Panc1 (cell line): ENCODE measurements at regions of chr2 and their contacts with region 1.

Region 1: GRCh38 chr2:143186876-143187275 is 57.7 kb downstream of the ARHGAP15 start:
- DNase-seq: no peak
- ATAC-seq: no peak
- H3K4me3 ChIP-seq: no peak overlapping the region
- H3K27ac ChIP-seq: no peak overlapping the region
- H3K4me1 ChIP-seq: no peaks in the 10 kb centered on the region
- H3K27me3 ChIP-seq: no peaks in the 10 kb centered on the region; the same call in 1 of the 2 replicates
- CTCF ChIP-seq: no peak

Region 2: DNA sequence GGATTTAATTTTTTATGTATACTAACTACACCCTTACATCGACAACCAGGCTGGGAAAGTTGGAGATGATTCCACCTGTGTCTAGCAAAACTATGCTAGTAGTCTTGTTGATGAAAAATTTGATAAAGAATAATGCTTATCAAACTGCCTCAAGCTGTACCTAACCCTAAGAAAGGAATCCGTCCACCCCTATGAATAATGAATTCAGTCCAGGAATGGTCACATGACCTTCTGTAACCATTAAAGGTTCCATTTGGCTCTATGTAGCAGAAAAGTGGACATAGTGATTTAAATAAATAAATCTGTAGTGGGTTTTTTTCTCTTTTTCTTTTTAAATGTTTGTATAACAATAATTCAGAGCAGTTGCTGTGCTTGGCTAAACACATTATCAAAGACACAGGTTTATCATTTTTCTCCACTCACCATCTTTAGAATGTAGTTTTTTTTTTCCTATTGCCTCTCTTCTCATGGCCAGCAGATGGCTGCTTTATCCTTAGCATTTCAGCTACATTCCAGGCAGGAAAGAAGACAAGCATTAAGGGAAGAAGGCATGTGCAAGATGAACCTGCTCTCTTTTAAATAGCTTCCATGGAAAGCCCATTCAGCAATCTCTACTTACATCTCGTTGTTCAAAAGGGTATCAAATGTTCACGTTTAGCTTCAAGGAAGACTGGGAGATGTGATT is 15.2 kb before region 1 on chr2:
- CTCF ChIA-PET with region 1: no interaction called
- POLR2A ChIA-PET with region 1: no interaction called
- in situ Hi-C with region 1: no loop called
- intact Hi-C with region 1: loop called (anchors 1 kb)
- DNase-seq: no peak
- ATAC-seq: no peak; the same call in 1 of the 2 replicates
- H3K4me3 ChIP-seq: no peak overlapping the region
- H3K27ac ChIP-seq: no peak overlapping the region
- H3K4me1 ChIP-seq: no peaks in the 10 kb centered on the region
- H3K27me3 ChIP-seq: no peaks in the 10 kb centered on the region
- CTCF ChIP-seq: peak; percentile 33; the same call in 1 of the 2 replicates